ENCODE measurements at regions of chr20 and their contacts with region 1.

Region 1: DNA sequence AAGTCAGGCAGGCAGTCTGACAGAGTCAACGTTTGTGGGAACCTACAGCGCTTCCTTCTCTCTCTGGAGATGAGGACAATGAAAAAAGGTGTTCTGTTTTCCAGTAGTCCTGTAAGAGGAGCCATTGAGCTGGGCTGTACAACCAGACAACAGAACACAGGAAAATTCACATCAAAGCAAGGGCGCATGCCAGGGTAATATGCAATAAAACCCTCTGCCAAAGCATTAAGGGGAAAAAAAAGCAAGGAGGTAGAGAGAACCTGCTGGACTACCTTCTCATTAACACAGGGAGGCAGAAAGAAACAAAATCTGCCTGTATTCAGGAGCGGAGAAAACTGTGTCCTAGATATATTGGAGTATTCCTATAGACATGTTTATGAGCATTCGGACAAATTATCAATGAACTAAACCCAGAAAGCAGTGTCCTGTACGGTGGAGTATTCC is 1.3 kb downstream of the RNF24 start:
- DNase-seq: peak in 1 of 2 donors; percentile 69
- H3K4me3 ChIP-seq: no peak overlapping the region
- CTCF ChIP-seq: peak in 1 of 3 donors; percentile 30
- POLR2A ChIP-seq: no peak

Region 2: GRCh38 chr20:3924304-3925112 is 89.5 kb before region 1 on chr20:
- intact Hi-C with region 1: no loop called
- DNase-seq: peak in 1 of 2 donors; percentile 89
- H3K4me3 ChIP-seq: no peak overlapping the region
- CTCF ChIP-seq: no peak
- POLR2A ChIP-seq: no peak

Region 3: DNA sequence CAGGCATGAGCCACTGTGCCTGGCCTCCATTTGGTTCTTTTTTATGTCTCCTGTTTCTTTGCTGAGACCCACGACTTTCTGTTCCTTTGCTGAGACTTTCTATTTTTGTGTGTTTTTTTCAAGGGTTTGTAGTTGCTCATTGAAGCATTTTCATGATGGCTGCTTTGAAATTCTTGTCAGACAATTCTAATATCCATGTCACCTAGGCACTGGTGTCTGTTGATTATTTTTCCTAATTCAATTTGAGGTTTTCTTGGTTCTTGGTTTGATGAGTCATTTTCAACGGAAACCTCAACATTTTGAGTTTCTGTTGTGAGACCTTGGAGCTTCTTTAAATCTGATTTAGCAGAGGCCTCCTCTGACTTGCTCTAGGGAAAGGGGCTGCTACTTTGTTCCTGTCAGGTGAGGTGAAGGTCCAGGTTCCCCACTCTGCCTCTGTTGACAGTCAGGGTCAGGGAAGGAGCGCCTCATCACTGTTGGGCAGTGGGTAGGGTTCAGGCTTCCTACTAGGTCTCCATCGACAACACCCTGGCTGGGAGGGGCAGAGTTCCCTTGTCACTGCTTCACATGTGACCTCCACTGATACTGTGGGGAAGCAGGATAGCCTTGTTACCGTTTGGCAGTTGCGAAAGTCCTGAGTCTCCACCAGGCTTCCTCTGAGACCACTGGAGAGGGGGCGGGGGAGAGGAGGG is 68.5 kb after region 1 on chr20:
- intact Hi-C with region 1: loop called (anchors 10 kb)
- DNase-seq: peak; percentile 59 to 89
- H3K4me3 ChIP-seq: no peak overlapping the region
- CTCF ChIP-seq: no peak
- POLR2A ChIP-seq: no peak

Region 4: DNA sequence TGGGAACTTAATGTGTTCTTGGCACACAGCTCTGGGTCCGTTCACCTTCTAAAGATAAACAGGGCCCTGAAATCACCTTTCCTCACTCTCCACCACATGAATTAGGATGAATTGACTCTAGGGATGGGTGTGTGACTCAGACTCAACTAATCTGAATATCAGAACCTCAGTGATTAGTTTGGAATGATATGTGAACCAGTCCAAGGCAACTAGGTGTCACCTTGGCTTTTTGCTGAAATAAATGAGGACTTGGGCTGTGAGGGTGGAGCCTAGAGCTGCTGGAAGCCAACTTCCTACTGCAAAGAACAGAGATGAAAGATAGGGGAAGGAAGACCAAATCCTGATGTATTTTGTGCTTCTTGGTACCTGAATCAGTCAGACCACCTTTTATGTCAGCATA is 133.3 kb after region 1 on chr20:
- intact Hi-C with region 1: no loop called
- DNase-seq: no peak
- H3K4me3 ChIP-seq: no peak overlapping the region
- CTCF ChIP-seq: no peak
- POLR2A ChIP-seq: no peak

Region 5: DNA sequence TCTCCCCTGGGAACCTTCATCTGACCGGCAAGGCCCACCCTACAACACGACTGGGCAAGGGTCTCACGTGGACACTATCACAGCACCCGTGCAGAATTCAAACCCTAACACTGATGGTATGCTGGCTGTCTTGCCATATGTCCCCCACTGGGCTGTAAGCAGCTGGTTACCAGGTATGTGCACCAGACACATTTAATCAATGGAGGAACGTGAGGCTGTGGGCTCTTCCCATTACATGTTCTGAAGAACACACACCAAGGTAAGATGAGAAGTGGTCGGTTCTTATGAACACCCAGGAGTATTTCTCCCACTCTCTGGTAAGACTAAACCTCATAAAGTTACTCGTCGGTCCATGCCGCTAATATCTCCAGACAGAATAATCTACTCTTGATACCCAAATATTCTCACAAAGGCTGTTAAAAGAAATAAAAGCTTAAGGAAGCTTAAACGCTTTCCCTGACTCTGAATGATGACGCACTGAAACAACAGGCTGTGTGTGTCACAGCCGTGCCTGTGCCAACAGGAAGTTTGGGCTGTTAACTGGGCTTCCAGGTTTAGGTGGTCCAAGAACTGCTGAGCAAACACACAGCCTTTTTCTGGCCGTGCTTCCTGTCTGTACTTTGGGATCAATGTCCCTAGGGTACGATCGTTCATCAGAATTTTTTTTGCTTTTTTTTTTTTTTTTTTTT is 911.9 kb after region 1 on chr20:
- intact Hi-C with region 1: no loop called
- DNase-seq: peak; percentile 36 to 81
- H3K4me3 ChIP-seq: no peak overlapping the region
- CTCF ChIP-seq: no peak
- POLR2A ChIP-seq: no peak

Measured in lower leg skin (tissue), 4 donors.